SK-N-SH (cell line): ENCODE measurements at regions of chr22 and their contacts with region 1.

Region 1: GRCh38 chr22:30634471-30635233 is 929 bp upstream of the SLC35E4 start:
- DNase-seq: peak; percentile 90
- H3K4me3 ChIP-seq: peak overlapping the region; percentile 65 to 78
- H3K27ac ChIP-seq: peak overlapping the region; percentile 92 to 93
- H3K4me1 ChIP-seq: peaks cover 18 to 27% of the 10 kb centered on the region in 2 experiments; a peak in 3 of 4 replicates
- H3K27me3 ChIP-seq: no peaks in the 10 kb centered on the region
- CTCF ChIP-seq: peak; percentile 93
- EP300 ChIP-seq: no peak
- RAD21 ChIP-seq: peak; percentile 91

Region 2: DNA sequence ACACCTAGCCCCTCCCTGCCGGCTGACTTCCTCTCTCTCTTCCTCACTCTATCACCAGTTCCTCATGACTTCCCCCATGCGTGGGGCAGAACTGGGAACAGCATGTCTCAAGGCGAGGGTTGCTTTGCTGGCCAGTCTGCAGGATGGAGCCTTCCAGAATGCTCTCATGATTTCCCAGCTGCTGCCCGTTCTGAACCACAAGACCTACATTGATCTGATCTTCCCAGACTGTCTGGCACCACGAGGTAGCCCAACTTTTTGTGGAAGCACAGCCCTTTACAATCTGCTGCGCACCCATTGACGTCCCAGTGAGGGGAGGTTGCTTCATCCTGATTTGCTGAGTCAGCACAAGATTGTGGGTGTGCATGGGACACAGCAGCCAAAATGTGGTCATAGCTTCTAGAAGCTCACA is 19.1 kb before region 1 on chr22:
- CTCF ChIA-PET with region 1: interaction called, 18 read pairs
- POLR2A ChIA-PET with region 1: no interaction called
- DNase-seq: no peak
- H3K4me3 ChIP-seq: no peak overlapping the region
- H3K27ac ChIP-seq: no peak overlapping the region
- H3K4me1 ChIP-seq: no peaks in the 10 kb centered on the region
- H3K27me3 ChIP-seq: no peaks in the 10 kb centered on the region
- CTCF ChIP-seq: no peak
- EP300 ChIP-seq: no peak
- RAD21 ChIP-seq: no peak

Region 3: GRCh38 chr22:30680991-30681770 is 46.5 kb after region 1 on chr22:
- CTCF ChIA-PET with region 1: interaction called, 21 read pairs
- POLR2A ChIA-PET with region 1: no interaction called
- DNase-seq: peak; percentile 34
- H3K4me3 ChIP-seq: no peak overlapping the region
- H3K27ac ChIP-seq: peak overlapping the region in 1 of 2 experiments; percentile 67; a peak in 2 of 4 replicates
- H3K4me1 ChIP-seq: peaks cover 0 to 28% of the 10 kb centered on the region in 2 experiments; a peak in 1 of 4 replicates
- H3K27me3 ChIP-seq: no peaks in the 10 kb centered on the region
- CTCF ChIP-seq: no peak
- EP300 ChIP-seq: 0 out of 4 replicates have a peak, but pooled peaks of 1 of the 2 experiments have one; percentile 6
- RAD21 ChIP-seq: no peak

Region 4: GRCh38 chr22:30701872-30702271 is 67.2 kb after region 1 on chr22:
- CTCF ChIA-PET with region 1: interaction called, 11 read pairs
- POLR2A ChIA-PET with region 1: no interaction called
- DNase-seq: no peak
- H3K4me3 ChIP-seq: no peak overlapping the region
- H3K27ac ChIP-seq: no peak overlapping the region
- H3K4me1 ChIP-seq: peaks cover 7 to 9% of the 10 kb centered on the region in 2 experiments; a peak in 2 of 4 replicates
- H3K27me3 ChIP-seq: no peaks in the 10 kb centered on the region
- CTCF ChIP-seq: no peak
- EP300 ChIP-seq: no peak
- RAD21 ChIP-seq: no peak

Region 5: DNA sequence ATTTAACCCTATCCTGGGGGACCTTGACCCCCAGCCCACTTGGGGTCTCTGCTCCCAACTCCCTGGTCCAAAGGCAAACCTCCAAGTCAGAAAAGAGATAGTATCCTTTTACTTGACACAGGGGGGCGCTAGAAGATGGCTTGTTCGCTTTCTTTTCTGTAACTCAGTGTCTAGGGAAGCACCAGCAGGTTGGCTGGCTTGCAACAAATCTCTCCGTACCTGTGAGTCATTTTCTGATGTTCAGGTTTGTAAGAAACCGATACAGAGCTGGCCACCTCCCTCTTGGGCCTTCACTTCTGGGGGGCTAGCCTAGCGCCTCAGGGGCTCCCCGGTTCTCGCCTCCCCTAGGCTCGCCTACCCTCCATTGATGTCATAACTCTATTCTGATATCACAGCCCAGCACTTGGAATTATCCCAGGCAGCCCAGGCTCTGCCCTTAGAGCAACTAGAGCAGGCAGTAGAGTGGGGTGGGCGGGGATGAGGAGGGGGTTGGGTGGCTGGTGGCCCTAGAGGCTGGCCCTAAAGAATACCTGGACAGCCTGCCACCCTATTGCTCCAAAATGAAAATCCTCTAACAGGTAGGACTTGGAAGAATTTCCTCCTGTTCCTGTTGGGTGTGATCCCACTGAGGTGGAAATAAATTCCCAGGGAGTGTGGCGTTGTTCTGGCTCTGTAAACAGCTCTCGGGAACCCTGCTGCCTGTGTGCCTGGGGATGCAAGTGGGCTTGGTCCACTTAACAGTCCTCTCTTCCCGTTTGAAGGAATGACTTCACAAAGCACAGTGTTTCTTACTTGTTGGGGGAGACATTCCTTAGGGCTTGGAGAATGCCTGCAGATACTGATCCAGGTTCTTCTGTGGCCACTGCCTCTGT is 129.4 kb after region 1 on chr22:
- CTCF ChIA-PET with region 1: interaction called, 17 read pairs
- POLR2A ChIA-PET with region 1: interaction called, 4 read pairs
- DNase-seq: peak; percentile 72
- H3K4me3 ChIP-seq: no peak overlapping the region; a peak in 1 of 4 replicates
- H3K27ac ChIP-seq: no peak overlapping the region
- H3K4me1 ChIP-seq: no peaks in the 10 kb centered on the region
- H3K27me3 ChIP-seq: no peaks in the 10 kb centered on the region
- CTCF ChIP-seq: peak; percentile 84
- EP300 ChIP-seq: no peak
- RAD21 ChIP-seq: peak; percentile 95